ENCODE measurements at regions of chr12 and their contacts with region 1.

Region 1: GRCh38 chr12:57069523-57069922 is 9.1 kb downstream of the NEMP1 start:
- DNase-seq: peak; percentile 89 to 94 (median 93)
- H3K4me3 ChIP-seq: no peak overlapping the region
- H3K27ac ChIP-seq: peak overlapping the region in 1 of 2 experiments; percentile 68
- H3K4me1 ChIP-seq: peaks cover 0 to 9% (median 6%) of the 10 kb centered on the region in 4 experiments
- H3K27me3 ChIP-seq: no peaks in the 10 kb centered on the region

Region 2: GRCh38 chr12:56695327-56696101 is 374.0 kb before region 1 on chr12:
- CTCF ChIA-PET with region 1: no interaction called
- POLR2A ChIA-PET with region 1: no interaction called
- DNase-seq: no peak
- H3K4me3 ChIP-seq: no peak overlapping the region
- H3K27ac ChIP-seq: no peak overlapping the region
- H3K4me1 ChIP-seq: peaks cover 4 to 14% (median 8%) of the 10 kb centered on the region in 4 experiments
- H3K27me3 ChIP-seq: no peaks in the 10 kb centered on the region

Region 3: DNA sequence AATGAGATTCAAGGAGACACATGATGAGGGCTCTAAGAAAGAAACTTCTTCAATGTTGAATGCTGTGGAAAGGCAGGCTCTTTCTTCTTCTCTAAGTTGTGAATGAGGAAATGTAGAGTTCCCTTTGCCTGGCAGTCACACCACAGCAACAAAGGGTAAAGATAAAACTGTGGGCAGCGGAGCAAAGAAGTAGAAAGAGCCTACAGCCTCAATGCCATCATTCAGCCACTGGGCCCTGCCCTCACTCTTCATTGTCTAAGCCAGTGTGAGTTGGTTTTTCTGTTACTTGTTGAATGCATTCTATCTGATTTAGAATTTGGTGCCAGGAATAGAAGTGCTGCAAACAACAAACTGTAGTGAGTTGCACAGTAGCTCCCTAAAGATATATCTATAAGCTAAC is 147.5 kb before region 1 on chr12:
- CTCF ChIA-PET with region 1: no interaction called
- POLR2A ChIA-PET with region 1: no interaction called
- DNase-seq: peak in 2 of 3 donors; percentile 60 to 73
- H3K4me3 ChIP-seq: no peak overlapping the region
- H3K27ac ChIP-seq: no peak overlapping the region
- H3K4me1 ChIP-seq: peaks cover 0 to 7% (median 1%) of the 10 kb centered on the region in 4 experiments
- H3K27me3 ChIP-seq: no peaks in the 10 kb centered on the region

Region 4: GRCh38 chr12:56987551-56988053 is 81.9 kb before region 1 on chr12:
- CTCF ChIA-PET with region 1: no interaction called
- POLR2A ChIA-PET with region 1: no interaction called
- DNase-seq: peak; percentile 61 to 69 (median 68)
- H3K4me3 ChIP-seq: peak overlapping the region in 3 of 7 experiments; percentile 14 to 54 (median 20)
- H3K27ac ChIP-seq: no peak overlapping the region
- H3K4me1 ChIP-seq: peaks cover 5 to 55% (median 40%) of the 10 kb centered on the region in 4 experiments
- H3K27me3 ChIP-seq: no peaks in the 10 kb centered on the region

Region 5: GRCh38 chr12:57058454-57058853 is 11.1 kb before region 1 on chr12:
- CTCF ChIA-PET with region 1: interaction called, 12 read pairs
- POLR2A ChIA-PET with region 1: no interaction called
- DNase-seq: no peak
- H3K4me3 ChIP-seq: no peak overlapping the region
- H3K27ac ChIP-seq: peak overlapping the region in 1 of 2 experiments; percentile 1
- H3K4me1 ChIP-seq: no peaks in the 10 kb centered on the region
- H3K27me3 ChIP-seq: no peaks in the 10 kb centered on the region

Region 6: GRCh38 chr12:57111031-57111734 is 41.7 kb after region 1 on chr12 and contains the start of gene STAT6:
- CTCF ChIA-PET with region 1: interaction called, 835 read pairs
- POLR2A ChIA-PET with region 1: interaction called, 23 read pairs
- DNase-seq: peak; percentile 92 to 96 (median 94)
- H3K4me3 ChIP-seq: peak within 1 kb of the TSS; percentile 72 to 98 (median 90)
- H3K27ac ChIP-seq: peak within 1 kb of the TSS; percentile 85 to 95
- H3K4me1 ChIP-seq: peaks cover 6 to 37% (median 30%) of the 10 kb centered on the region in 4 experiments
- H3K27me3 ChIP-seq: no peaks in the 10 kb centered on the region

Region 7: GRCh38 chr12:57116580-57117281 is 47.2 kb after region 1 on chr12:
- CTCF ChIA-PET with region 1: interaction called, 835 read pairs
- POLR2A ChIA-PET with region 1: interaction called, 23 read pairs
- DNase-seq: no peak
- H3K4me3 ChIP-seq: no peak overlapping the region
- H3K27ac ChIP-seq: no peak overlapping the region
- H3K4me1 ChIP-seq: peaks cover 0 to 16% (median 10%) of the 10 kb centered on the region in 4 experiments
- H3K27me3 ChIP-seq: peaks cover 0 to 3% (median 0%) of the 10 kb centered on the region in 5 experiments

Region 8: GRCh38 chr12:57175428-57176138 is 106.1 kb after region 1 on chr12:
- CTCF ChIA-PET with region 1: interaction called, 20 read pairs
- POLR2A ChIA-PET with region 1: interaction called, 6 read pairs
- DNase-seq: peak; percentile 18 to 50 (median 33)
- H3K4me3 ChIP-seq: no peak overlapping the region
- H3K27ac ChIP-seq: no peak overlapping the region
- H3K4me1 ChIP-seq: no peaks in the 10 kb centered on the region
- H3K27me3 ChIP-seq: peaks cover 0 to 1% (median 0%) of the 10 kb centered on the region in 5 experiments

Region 9: DNA sequence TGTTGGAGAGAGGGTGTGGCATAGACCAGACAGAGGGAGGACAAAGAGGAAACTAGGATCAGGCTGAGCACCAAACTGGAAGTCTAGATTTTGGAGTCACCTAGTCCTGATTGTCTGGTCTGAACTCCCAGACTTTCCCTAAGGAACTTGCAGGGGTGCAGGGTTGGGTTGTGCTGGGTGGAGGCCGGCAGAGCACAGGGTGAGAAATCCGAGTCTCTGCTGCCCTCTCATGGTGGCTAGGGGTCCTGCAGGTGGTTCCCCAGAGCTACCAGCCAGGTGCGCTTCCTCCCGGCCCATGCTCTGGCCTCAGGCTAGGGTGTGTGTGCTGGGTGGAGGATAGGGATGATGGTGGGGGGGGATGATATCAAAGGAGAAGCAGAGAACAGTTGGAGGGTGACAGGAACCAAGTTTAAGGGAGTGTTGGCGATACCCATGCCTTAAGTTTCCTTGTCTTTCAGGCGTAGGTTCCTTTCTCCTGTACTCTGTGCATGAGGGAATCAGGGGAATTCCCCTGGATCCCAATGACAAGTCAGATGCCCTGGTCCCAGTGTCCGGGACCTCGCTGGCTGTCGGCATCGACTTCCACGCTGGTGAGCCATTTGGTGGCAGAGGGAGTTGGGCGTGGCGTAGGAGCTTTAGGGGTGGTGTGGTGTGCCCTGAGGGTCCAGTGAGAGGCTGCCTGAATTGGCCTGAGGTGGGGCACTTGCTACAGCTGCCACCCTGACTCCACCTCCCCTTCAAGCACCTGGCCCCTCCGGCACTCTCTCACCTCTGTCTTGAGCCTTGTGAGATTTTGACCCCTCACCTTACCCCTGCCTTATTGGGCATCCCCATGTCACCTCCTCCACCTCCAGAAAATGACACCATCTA is 113.6 kb after region 1 on chr12:
- CTCF ChIA-PET with region 1: interaction called, 20 read pairs
- POLR2A ChIA-PET with region 1: no interaction called
- DNase-seq: peak; percentile 49 to 75 (median 63)
- H3K4me3 ChIP-seq: no peak overlapping the region
- H3K27ac ChIP-seq: no peak overlapping the region
- H3K4me1 ChIP-seq: no peaks in the 10 kb centered on the region
- H3K27me3 ChIP-seq: peaks cover 0 to 3% (median 0%) of the 10 kb centered on the region in 5 experiments

Measured in common myeloid progenitor, CD34-positive (primary cell).